Vagina (tissue), 2 donors: ENCODE measurements at regions of chr20 and their contacts with region 1.

Region 1: GRCh38 chr20:4082406-4083097 is 67.2 kb upstream of the RNF24 start:
- DNase-seq: peak in 1 of 2 donors; percentile 82
- H3K4me3 ChIP-seq: no peak overlapping the region
- H3K27ac ChIP-seq: peak overlapping the region; percentile 66
- H3K4me1 ChIP-seq: peaks cover 13% of the 10 kb centered on the region
- H3K27me3 ChIP-seq: no peaks in the 10 kb centered on the region
- CTCF ChIP-seq: no peak
- POLR2A ChIP-seq: no peak

Region 2: GRCh38 chr20:3218307-3218988 is 864.1 kb before region 1 on chr20:
- intact Hi-C with region 1: no loop called
- DNase-seq: no peak
- H3K4me3 ChIP-seq: no peak overlapping the region
- H3K27ac ChIP-seq: no peak overlapping the region
- H3K4me1 ChIP-seq: peaks cover 9% of the 10 kb centered on the region
- H3K27me3 ChIP-seq: no peaks in the 10 kb centered on the region
- CTCF ChIP-seq: peak; percentile 51 to 87 (median 76)
- POLR2A ChIP-seq: no peak

Region 3: DNA sequence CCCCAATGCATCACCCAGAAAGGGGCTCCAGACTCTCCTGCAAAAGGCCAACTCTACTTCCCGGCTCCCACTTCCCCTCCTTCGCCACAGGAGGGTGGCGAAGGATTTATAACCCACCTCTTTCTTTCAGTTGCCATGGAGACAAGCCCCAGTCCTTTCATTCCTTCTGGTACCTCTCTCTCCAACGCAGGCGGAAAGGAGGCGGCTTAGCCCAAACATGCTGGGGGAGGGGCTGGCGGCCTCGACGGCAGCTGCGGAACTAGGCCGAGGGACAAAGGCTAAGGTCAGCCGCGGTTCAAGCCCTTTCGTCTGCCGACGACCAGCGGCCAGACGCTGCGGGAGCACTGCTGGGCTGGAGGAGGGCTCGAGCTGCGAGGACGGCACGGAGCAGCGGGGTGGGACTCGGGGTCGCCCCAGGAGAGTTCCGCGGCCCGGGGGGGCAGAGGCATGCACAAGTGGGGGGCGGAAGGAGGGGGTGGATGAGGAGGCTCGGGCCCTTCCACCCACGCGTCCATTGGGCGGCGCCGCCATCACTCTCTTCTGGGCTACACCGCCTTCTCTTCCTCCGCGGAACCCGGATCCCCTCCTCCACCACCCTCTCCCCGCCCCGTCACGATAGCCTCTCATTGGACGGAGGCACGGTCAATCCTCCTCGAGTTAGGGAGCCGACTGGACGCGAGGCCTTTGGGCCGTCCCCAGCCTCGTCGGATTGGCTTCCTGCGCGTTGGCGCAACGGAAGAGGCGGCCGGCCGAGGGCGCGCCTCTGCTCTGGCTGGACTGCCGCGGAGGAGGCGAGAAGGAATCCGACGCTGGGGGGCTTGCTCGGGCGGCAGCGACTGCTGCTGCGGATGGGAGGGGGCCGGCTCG is 193.7 kb before region 1 on chr20 and contains the start of gene PANK2:
- intact Hi-C with region 1: loop called (anchors 10 kb)
- DNase-seq: peak; percentile 98
- H3K4me3 ChIP-seq: peak within 1 kb of the TSS; percentile 72 to 100
- H3K27ac ChIP-seq: peak within 1 kb of the TSS; percentile 98
- H3K4me1 ChIP-seq: peaks cover 45% of the 10 kb centered on the region
- H3K27me3 ChIP-seq: no peaks in the 10 kb centered on the region
- CTCF ChIP-seq: peak in 2 of 3 experiments; percentile 4 to 61
- POLR2A ChIP-seq: peak in 1 of 2 donors; percentile 95
- total RNA-seq, gene PANK2: 53.5 TPM

Region 4: GRCh38 chr20:4633780-4634179 is 551.2 kb after region 1 on chr20:
- intact Hi-C with region 1: no loop called
- DNase-seq: no peak
- H3K4me3 ChIP-seq: no peak overlapping the region
- H3K27ac ChIP-seq: no peak overlapping the region
- H3K4me1 ChIP-seq: no peaks in the 10 kb centered on the region
- H3K27me3 ChIP-seq: no peaks in the 10 kb centered on the region
- CTCF ChIP-seq: no peak
- POLR2A ChIP-seq: no peak